ENCODE measurements at regions of chr3 and their contacts with region 1.

Region 1: DNA sequence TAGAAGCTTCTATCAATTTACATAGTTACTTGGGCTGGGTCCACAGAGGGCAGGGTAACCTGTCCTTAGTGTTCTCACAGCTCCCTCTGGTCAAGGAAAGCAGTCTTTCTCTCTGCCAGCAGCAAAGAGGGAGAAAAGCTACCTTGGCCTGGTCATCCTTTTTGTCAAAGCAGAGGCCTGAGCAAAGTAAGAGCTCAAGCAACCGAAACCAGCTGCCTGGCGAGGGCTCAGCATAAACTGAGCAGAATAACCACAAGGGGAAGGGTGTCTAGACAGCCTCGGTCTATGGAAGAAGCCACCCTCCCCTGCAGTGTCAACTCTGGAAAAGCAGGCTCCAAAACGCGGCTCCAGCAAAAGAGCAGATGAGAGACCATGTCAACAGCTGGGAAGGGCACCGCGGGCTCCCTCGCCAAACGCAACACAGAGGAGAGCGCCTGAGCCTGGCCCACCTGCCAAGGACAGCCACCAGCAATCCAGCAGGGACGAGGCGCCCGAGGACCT is 17.4 kb downstream of the LRIG1 start:
- DNase-seq: peak; percentile 78 to 83
- ATAC-seq: peak; percentile 50 to 64
- H3K4me3 ChIP-seq: peak overlapping the region; percentile 26 to 38 (median 30)
- H3K27ac ChIP-seq: peak overlapping the region; percentile 92 to 96 (median 94)
- H3K4me1 ChIP-seq: peaks cover 90 to 93% of the 10 kb centered on the region in 2 donors
- H3K27me3 ChIP-seq: no peaks in the 10 kb centered on the region
- CTCF ChIP-seq: no peak
- POLR2A ChIP-seq: no peak

Region 2: DNA sequence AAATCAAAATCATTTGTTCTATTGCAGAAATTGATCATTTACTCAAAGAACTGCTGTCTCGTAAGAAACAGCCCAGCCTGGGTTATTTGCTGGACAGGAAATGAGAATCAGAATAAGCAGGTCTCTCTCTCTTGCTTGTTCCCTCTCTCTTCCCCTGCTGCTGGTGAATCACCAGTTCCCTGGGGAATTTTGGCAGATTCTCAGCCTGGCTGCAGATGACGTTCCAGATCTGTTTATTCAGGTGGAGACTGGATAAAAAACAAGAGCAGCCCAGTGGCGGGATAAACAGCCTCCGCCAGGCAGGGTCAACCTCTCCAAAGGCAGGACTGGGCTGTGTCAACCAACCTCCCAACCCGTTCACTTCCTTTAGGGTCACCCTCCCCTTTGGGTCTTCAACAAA is 54.7 kb before region 1 on chr3:
- in situ Hi-C with region 1: no loop called
- intact Hi-C with region 1: loop called (anchors 2 kb)
- DNase-seq: peak; percentile 91 to 93
- ATAC-seq: peak; percentile 64 to 85
- H3K4me3 ChIP-seq: peak overlapping the region; percentile 10 to 38 (median 14)
- H3K27ac ChIP-seq: peak overlapping the region; percentile 77 to 90 (median 82)
- H3K4me1 ChIP-seq: peaks cover 85 to 91% of the 10 kb centered on the region in 2 donors
- H3K27me3 ChIP-seq: no peaks in the 10 kb centered on the region
- CTCF ChIP-seq: no peak
- POLR2A ChIP-seq: peak; percentile 20 to 60

Region 3: DNA sequence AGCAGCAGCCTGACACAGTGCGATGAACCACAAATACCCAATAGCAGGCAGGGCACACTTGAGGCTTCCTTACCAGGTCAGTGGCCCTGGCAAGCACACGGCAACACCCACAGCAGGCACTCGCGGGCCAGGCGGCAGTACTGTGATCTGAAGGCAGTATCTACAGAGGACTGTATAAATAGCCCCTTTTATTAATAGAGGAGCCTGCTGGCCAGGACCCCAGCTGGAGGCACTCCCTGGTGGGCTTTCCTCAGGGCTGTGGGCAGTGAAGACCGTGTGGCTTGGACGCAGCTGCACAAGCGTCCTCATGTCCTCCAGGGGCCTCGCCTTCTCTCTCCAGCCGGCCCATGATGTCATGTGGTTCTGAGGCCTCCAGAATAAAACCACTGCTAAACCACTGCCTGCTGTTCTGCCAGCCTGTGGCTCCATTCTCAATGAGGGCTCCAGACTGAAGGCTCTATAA is 26.7 kb before region 1 on chr3:
- in situ Hi-C with region 1: no loop called
- intact Hi-C with region 1: loop called (anchors 2 kb)
- DNase-seq: peak; percentile 53 to 56
- ATAC-seq: peak; percentile 47 to 63
- H3K4me3 ChIP-seq: peak overlapping the region in 2 of 4 donors; percentile 7 to 18
- H3K27ac ChIP-seq: peak overlapping the region; percentile 84 to 93 (median 92)
- H3K4me1 ChIP-seq: peaks cover 59% of the 10 kb centered on the region in 2 donors
- H3K27me3 ChIP-seq: no peaks in the 10 kb centered on the region
- CTCF ChIP-seq: no peak
- POLR2A ChIP-seq: peak in 1 of 2 donors; percentile 29